Ascending aorta (tissue), 2 donors: ENCODE measurements at regions of chr14 and their contacts with region 1.

Region 1: GRCh38 chr14:95993768-95994592 is 45.2 kb upstream of the C14orf132 start:
- DNase-seq: no peak
- H3K4me3 ChIP-seq: no peak overlapping the region
- H3K27ac ChIP-seq: no peak overlapping the region
- H3K4me1 ChIP-seq: no peaks in the 10 kb centered on the region
- H3K27me3 ChIP-seq: no peaks in the 10 kb centered on the region
- CTCF ChIP-seq: peak; percentile 54 to 82 (median 61)

Region 2: GRCh38 chr14:95442633-95443021 is 551.4 kb before region 1 on chr14:
- intact Hi-C with region 1: loop called (anchors 10 kb)
- DNase-seq: peak; percentile 19 to 90
- H3K4me3 ChIP-seq: no peak overlapping the region
- H3K27ac ChIP-seq: peak overlapping the region; percentile 25 to 34
- H3K4me1 ChIP-seq: no peaks in the 10 kb centered on the region
- H3K27me3 ChIP-seq: no peaks in the 10 kb centered on the region
- CTCF ChIP-seq: peak; percentile 80 to 90 (median 84)

Region 3: DNA sequence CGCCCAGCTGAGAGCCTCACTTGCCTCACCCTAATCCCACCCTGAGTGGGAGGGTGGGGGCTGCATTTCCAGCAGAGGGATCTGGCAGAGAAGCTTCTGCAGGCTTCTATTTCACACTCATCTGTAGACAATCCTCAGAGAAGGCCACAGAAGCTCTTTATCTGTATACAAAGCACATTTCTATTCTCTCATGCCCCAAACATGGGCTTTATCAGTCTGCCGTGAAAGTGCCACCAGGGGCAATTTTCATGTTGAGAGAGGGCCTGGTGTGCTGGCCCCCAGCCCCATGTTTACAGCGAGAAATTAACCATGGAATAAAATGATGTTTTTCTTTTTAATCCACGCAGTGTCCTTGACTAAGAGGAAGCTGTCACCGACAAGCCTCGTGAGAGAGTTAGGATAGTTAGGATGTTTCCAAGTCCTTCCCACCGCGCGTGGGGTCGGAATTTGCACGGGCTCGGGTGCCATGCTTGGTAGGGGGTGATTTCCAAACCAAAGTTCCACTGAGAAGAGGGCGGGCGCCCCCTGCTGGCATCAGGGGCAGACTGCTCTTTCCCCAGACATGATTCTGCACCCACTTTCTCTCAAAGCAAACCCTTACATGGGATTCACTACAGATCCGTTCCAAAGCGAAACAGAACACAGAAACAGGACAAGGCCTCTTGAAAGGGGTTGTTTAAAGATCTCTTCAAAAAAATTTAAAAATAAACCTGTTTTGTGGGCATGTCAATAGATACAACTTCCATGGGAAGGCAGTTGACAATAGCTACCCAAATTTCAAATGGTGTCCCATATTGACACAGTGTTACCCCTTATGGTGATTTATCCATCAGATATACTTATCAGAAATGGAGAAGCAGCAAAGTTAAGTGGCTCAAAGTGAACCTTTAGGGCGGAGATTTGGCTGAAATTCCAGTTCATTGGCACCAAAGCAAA is 281.5 kb after region 1 on chr14:
- intact Hi-C with region 1: loop called (anchors 2 kb)
- DNase-seq: peak in 1 of 2 donors; percentile 73
- H3K4me3 ChIP-seq: no peak overlapping the region
- H3K27ac ChIP-seq: no peak overlapping the region
- H3K4me1 ChIP-seq: no peaks in the 10 kb centered on the region
- H3K27me3 ChIP-seq: no peaks in the 10 kb centered on the region
- CTCF ChIP-seq: peak; percentile 62 to 90 (median 71)